CD14-positive monocyte (primary cell): ENCODE measurements at regions of chr9 and their contacts with region 1.

Region 1: GRCh38 chr9:112750111-112750767 is at the start of gene SNX30:
- DNase-seq: peak; percentile 80 to 89 (median 87)
- H3K4me3 ChIP-seq: peak within 1 kb of the TSS; percentile 77 to 84 (median 81)
- H3K4me3 Mint-ChIP-seq: peak within 1 kb of the TSS; percentile 92 to 96
- H3K27ac ChIP-seq: peak within 1 kb of the TSS; percentile 86 to 91
- H3K27ac Mint-ChIP-seq: peak within 1 kb of the TSS; percentile 94 to 98 (median 95)
- H3K4me1 ChIP-seq: peaks cover 56 to 68% of the 10 kb centered on the region in 2 donors
- H3K4me1 Mint-ChIP-seq: peaks cover 67% of the 10 kb centered on the region
- H3K27me3 ChIP-seq: no peaks in the 10 kb centered on the region
- H3K27me3 Mint-ChIP-seq: no peaks in the 10 kb centered on the region
- CTCF ChIP-seq: no peak
- polyA plus RNA-seq, gene SNX30: 10.3 to 31.3 (median 10.4) TPM

Region 2: DNA sequence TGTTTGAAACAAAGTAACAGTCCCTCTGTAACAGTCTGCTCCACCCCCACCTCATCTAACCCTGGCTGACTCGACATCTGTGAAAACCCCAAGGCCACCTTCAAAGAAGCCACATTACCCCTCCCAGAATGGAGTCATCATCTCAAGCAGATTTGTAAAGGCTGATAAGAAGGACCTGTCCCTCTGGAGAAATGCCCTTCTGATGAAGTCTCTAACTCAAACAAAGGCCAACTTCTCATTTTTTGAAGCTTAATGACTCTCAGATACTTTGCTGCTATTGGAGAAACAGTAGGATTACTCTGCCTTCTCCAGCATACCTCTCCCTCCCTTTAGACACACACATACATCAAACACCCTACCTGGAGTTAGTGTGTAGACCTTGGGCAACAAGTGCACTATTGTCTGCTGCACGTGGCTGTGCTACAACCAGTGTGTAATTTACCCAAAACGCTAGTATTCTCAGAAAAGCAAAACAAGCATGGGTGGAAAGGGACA is 569.8 kb before region 1 on chr9:
- intact Hi-C with region 1: loop called in 1 of 2 experiments (anchors 5 kb)
- DNase-seq: peak in 2 of 3 donors; percentile 25 to 50
- H3K4me3 ChIP-seq: peak overlapping the region in 1 of 3 experiments; percentile 68
- H3K4me3 Mint-ChIP-seq: peak overlapping the region in 1 of 2 donors; percentile 26
- H3K27ac ChIP-seq: peak overlapping the region in 1 of 2 donors; percentile 76
- H3K27ac Mint-ChIP-seq: peak overlapping the region; percentile 20 to 94 (median 89)
- H3K4me1 ChIP-seq: peaks cover 62 to 64% of the 10 kb centered on the region in 2 donors
- H3K4me1 Mint-ChIP-seq: peaks cover 52% of the 10 kb centered on the region
- H3K27me3 ChIP-seq: no peaks in the 10 kb centered on the region
- H3K27me3 Mint-ChIP-seq: no peaks in the 10 kb centered on the region
- CTCF ChIP-seq: no peak

Region 3: GRCh38 chr9:112717661-112718341 is 32.4 kb before region 1 on chr9 and contains the start of gene INIP:
- intact Hi-C with region 1: loop called (anchors 2 to 5 kb)
- DNase-seq: peak; percentile 93 to 96 (median 94)
- H3K4me3 ChIP-seq: peak within 1 kb of the TSS; percentile 74 to 88 (median 86)
- H3K4me3 Mint-ChIP-seq: peak within 1 kb of the TSS; percentile 98 to 99
- H3K27ac ChIP-seq: peak within 1 kb of the TSS; percentile 87 to 97
- H3K27ac Mint-ChIP-seq: peak within 1 kb of the TSS; percentile 97 to 100 (median 99)
- H3K4me1 ChIP-seq: peaks cover 11 to 12% of the 10 kb centered on the region in 2 donors
- H3K4me1 Mint-ChIP-seq: peaks cover 6% of the 10 kb centered on the region
- H3K27me3 ChIP-seq: no peaks in the 10 kb centered on the region
- H3K27me3 Mint-ChIP-seq: no peaks in the 10 kb centered on the region
- CTCF ChIP-seq: no peak
- polyA plus RNA-seq, gene INIP: 10.7 to 53.0 (median 49.0) TPM

Region 4: DNA sequence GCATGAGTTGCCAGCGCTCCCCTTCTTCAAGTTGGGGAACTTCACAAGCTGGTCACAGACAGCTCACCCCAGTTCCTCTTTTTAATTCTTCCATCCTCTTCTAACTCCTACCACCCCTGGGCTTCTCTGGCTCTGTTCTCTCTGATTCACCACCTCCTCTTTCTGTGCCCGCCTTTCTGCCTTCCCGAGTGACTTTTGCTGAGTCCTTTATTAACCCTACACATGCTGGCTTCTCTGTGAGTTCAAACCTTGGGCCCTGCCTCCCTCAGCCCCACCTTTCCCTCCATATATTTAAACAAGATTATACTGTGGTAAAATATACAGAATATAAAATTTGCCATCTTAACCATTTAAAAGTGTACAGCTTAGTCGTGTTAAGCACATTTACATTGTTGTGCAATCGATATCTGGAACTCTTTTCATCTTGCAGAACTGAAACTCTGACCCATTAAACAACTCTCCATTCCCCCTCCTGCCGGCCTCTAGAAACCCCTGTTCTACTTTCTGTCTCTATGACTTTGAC is 108.4 kb after region 1 on chr9:
- intact Hi-C with region 1: loop called in 1 of 2 experiments (anchors 5 kb)
- DNase-seq: peak; percentile 87 to 95 (median 93)
- H3K4me3 ChIP-seq: peak overlapping the region in 1 of 3 experiments; percentile 70
- H3K4me3 Mint-ChIP-seq: peak overlapping the region; percentile 4 to 43
- H3K27ac ChIP-seq: peak overlapping the region; percentile 82 to 97
- H3K27ac Mint-ChIP-seq: peak overlapping the region; percentile 94 to 100 (median 99)
- H3K4me1 ChIP-seq: peaks cover 91 to 93% of the 10 kb centered on the region in 2 donors
- H3K4me1 Mint-ChIP-seq: peaks cover 94% of the 10 kb centered on the region
- H3K27me3 ChIP-seq: no peaks in the 10 kb centered on the region
- H3K27me3 Mint-ChIP-seq: peaks cover 0 to 5% (median 0%) of the 10 kb centered on the region in 3 donors
- CTCF ChIP-seq: no peak

Region 5: GRCh38 chr9:112887381-112887780 is 137.1 kb after region 1 on chr9:
- intact Hi-C with region 1: loop called in 1 of 2 experiments (anchors 5 kb)
- DNase-seq: peak; percentile 80 to 84 (median 84)
- H3K4me3 ChIP-seq: peak overlapping the region in 1 of 3 experiments; percentile 92
- H3K4me3 Mint-ChIP-seq: peak overlapping the region; percentile 94 to 98
- H3K27ac ChIP-seq: peak overlapping the region in 1 of 2 donors; percentile 48
- H3K27ac Mint-ChIP-seq: peak overlapping the region; percentile 60 to 87 (median 75)
- H3K4me1 ChIP-seq: peaks cover 55 to 67% of the 10 kb centered on the region in 2 donors
- H3K4me1 Mint-ChIP-seq: peaks cover 60% of the 10 kb centered on the region
- H3K27me3 ChIP-seq: no peaks in the 10 kb centered on the region
- H3K27me3 Mint-ChIP-seq: peaks cover 1 to 9% (median 6%) of the 10 kb centered on the region in 3 donors
- CTCF ChIP-seq: peak; percentile 83

Region 6: DNA sequence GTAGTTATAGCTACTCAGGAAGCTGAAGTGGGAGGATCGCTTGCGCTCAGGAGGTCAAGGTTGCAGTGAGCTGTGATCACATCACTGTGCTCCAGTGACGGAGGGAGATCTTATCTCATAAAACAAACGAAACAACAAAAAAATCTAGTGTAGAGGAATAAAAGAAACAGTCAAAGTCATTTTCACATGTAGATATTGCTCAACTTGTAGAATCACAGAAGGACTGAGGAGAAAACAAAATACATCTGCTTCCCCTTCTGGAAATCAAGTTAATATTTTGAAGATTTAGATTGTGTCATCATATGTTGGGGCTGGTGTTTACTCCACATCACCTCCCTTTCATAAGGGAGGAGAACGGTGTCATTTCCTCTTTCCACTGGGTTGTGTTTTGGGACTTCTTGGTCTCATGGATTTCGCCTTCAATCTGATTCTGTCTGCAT is 148.7 kb after region 1 on chr9:
- intact Hi-C with region 1: no loop called
- DNase-seq: peak; percentile 67 to 85 (median 78)
- H3K4me3 ChIP-seq: peak overlapping the region in 1 of 3 experiments; percentile 48
- H3K4me3 Mint-ChIP-seq: peak overlapping the region; percentile 53 to 78
- H3K27ac ChIP-seq: peak overlapping the region; percentile 80 to 87
- H3K27ac Mint-ChIP-seq: peak overlapping the region; percentile 92 to 98 (median 96)
- H3K4me1 ChIP-seq: peaks cover 65 to 79% of the 10 kb centered on the region in 2 donors
- H3K4me1 Mint-ChIP-seq: peaks cover 76% of the 10 kb centered on the region
- H3K27me3 ChIP-seq: no peaks in the 10 kb centered on the region
- H3K27me3 Mint-ChIP-seq: no peaks in the 10 kb centered on the region
- CTCF ChIP-seq: no peak